ENCODE measurements at regions of chr11 and their contacts with region 1.

Region 1: GRCh38 chr11:75142714-75143419 is 8.0 kb upstream of the SLCO2B1 start:
- DNase-seq: peak; percentile 90
- H3K4me3 Mint-ChIP-seq: no peak overlapping the region
- H3K27ac Mint-ChIP-seq: peak overlapping the region; percentile 53
- H3K4me1 Mint-ChIP-seq: peaks cover 16% of the 10 kb centered on the region
- H3K27me3 Mint-ChIP-seq: peaks cover 16% of the 10 kb centered on the region
- CTCF ChIP-seq: no peak

Region 2: DNA sequence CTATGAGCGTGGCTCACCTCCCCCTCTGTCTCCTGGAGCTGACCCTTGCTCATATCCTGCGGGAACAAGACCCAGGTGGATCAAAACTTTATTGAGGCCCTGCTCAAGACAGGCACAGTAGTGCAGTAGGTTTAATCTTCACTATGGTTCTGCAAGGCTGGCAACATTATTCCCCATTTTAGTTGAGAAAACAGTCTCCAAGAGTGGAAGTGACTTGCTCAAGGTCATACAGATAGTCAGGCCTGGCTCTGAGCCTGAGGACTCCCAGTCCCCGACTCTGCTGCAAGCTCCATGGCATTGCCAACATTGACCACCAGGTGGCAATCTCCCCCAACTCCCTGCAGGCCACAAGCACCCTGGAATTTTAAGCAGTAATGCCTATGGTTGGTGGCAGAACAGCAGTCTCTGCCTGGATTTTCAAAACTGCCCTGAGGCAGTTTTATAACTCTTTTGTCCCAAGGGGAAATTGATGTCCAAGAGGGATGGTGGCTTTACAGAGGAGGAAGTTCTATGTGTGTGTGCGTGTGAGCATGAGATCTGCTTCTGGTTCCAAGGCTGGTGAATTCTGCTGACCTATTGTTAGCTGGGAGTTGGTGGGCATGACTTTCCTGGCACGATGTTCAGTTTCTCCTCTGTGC is 120.0 kb before region 1 on chr11:
- CTCF ChIA-PET with region 1: interaction called, 15 read pairs
- POLR2A ChIA-PET with region 1: no interaction called
- intact Hi-C with region 1: loop called (anchors 1 kb)
- DNase-seq: peak; percentile 76
- H3K4me3 Mint-ChIP-seq: no peak overlapping the region
- H3K27ac Mint-ChIP-seq: no peak overlapping the region
- H3K4me1 Mint-ChIP-seq: no peaks in the 10 kb centered on the region
- H3K27me3 Mint-ChIP-seq: peaks cover 2% of the 10 kb centered on the region
- CTCF ChIP-seq: peak; percentile 97

Region 3: DNA sequence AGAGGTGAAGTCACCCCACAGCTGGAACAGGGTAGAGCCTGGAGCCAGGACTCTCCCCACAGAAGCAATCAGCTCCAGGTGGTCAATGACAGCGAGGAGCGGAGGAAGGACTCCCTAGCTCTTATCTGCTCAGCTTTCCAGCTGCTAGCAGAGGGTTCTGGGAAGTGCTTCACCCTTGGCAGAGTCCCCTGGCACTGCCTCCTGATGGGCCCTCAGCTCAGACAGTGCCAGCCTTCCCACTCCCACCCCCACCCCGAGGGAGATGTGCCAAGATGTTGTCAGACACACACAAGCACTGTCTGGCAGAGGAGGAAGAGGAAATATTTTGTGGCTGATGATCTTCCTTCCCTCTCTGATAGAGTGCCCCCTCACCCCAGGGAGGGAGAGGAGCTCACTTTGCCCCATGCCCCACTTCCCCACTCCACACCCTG is 52.3 kb after region 1 on chr11:
- CTCF ChIA-PET with region 1: interaction called, 21 read pairs
- POLR2A ChIA-PET with region 1: no interaction called
- intact Hi-C with region 1: no loop called
- DNase-seq: peak; percentile 49
- H3K4me3 Mint-ChIP-seq: no peak overlapping the region
- H3K27ac Mint-ChIP-seq: no peak overlapping the region
- H3K4me1 Mint-ChIP-seq: peaks cover 5% of the 10 kb centered on the region
- H3K27me3 Mint-ChIP-seq: peaks cover 14% of the 10 kb centered on the region
- CTCF ChIP-seq: no peak

Region 4: DNA sequence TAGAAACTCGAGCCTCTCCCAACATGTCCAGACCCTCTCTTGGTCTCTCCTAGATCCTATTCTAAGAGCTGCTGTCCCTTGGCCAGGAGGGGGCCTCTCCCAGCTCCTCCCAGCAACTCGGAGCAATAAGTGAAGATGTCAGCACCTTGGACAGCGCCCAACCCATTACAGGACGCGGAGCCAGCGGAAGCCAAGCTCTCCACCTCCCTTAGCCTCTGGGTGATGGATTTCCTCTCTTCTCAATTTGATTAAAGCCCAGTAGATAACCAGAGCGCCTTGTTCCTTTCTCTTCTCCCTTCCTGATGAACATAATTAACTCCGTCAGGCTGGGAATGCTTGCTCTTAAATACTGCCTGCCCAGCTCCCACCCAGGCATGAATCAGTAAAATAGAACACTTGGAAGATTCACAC is 71.5 kb after region 1 on chr11:
- CTCF ChIA-PET with region 1: interaction called, 227 read pairs
- POLR2A ChIA-PET with region 1: no interaction called
- intact Hi-C with region 1: no loop called
- DNase-seq: peak; percentile 84
- H3K4me3 Mint-ChIP-seq: no peak overlapping the region
- H3K27ac Mint-ChIP-seq: no peak overlapping the region
- H3K4me1 Mint-ChIP-seq: no peaks in the 10 kb centered on the region
- H3K27me3 Mint-ChIP-seq: peaks cover 60% of the 10 kb centered on the region
- CTCF ChIP-seq: no peak

Region 5: GRCh38 chr11:75270896-75271418 is 128.1 kb after region 1 on chr11:
- CTCF ChIA-PET with region 1: interaction called, 15 read pairs
- POLR2A ChIA-PET with region 1: no interaction called
- intact Hi-C with region 1: no loop called
- DNase-seq: peak; percentile 27
- H3K4me3 Mint-ChIP-seq: no peak overlapping the region
- H3K27ac Mint-ChIP-seq: no peak overlapping the region
- H3K4me1 Mint-ChIP-seq: no peaks in the 10 kb centered on the region
- H3K27me3 Mint-ChIP-seq: no peaks in the 10 kb centered on the region
- CTCF ChIP-seq: peak; percentile 55

Measured in MCF 10A (cell line).